ENCODE measurements at regions of chr13 and their contacts with region 1.

Region 1: GRCh38 chr13:27620377-27621115 is at the start of gene LNX2:
- DNase-seq: peak; percentile 67
- H3K4me3 ChIP-seq: peak within 1 kb of the TSS; percentile 87
- H3K27me3 ChIP-seq: no peaks in the 10 kb centered on the region
- CTCF ChIP-seq: no peak
- polyA plus RNA-seq, gene LNX2: 4.6 and 5.5 TPM in 2 replicates

Region 2: GRCh38 chr13:27533155-27533643 is 87.3 kb before region 1 on chr13:
- CTCF ChIA-PET with region 1: interaction called, 18 read pairs
- POLR2A ChIA-PET with region 1: no interaction called
- DNase-seq: no peak
- H3K4me3 ChIP-seq: no peak overlapping the region
- H3K27me3 ChIP-seq: 0 out of 2 replicates have a peak, but pooled peaks cover 3% of the 10 kb centered on the region
- CTCF ChIP-seq: peak; percentile 99

Region 3: GRCh38 chr13:27607125-27607524 is 13.4 kb before region 1 on chr13:
- CTCF ChIA-PET with region 1: interaction called, 10 read pairs
- POLR2A ChIA-PET with region 1: no interaction called
- DNase-seq: peak; percentile 43
- H3K4me3 ChIP-seq: no peak overlapping the region
- H3K27me3 ChIP-seq: no peaks in the 10 kb centered on the region
- CTCF ChIP-seq: no peak

Measured in BJ (cell line).